Activated T-helper 2 cell treated with anti-CD3 and anti-CD28 coated beads, Interferon-gamma antibody, Interleukin-2, Interleukin-4, amounts not matched to agents 10 μg/mL and 5 μg/mL and 100 μg/mL, durations not matched to agents 14 hours and 24 hours and 36 hours (primary cell): ENCODE measurements at regions of chr1 and their contacts with region 1.

Region 1: GRCh38 chr1:66374561-66375111 is 159.3 kb upstream of the SGIP1 start:
- DNase-seq: no peak
- H3K4me3 Mint-ChIP-seq: peak overlapping the region; percentile 63
- H3K27ac Mint-ChIP-seq: peak overlapping the region; percentile 96
- H3K4me1 Mint-ChIP-seq: peaks cover 60% of the 10 kb centered on the region
- H3K27me3 Mint-ChIP-seq: no peaks in the 10 kb centered on the region

Region 2: GRCh38 chr1:65393347-65393746 is 981.3 kb before region 1 on chr1:
- intact Hi-C with region 1: loop called (anchors 10 kb)
- DNase-seq: peak; percentile 13
- H3K4me3 Mint-ChIP-seq: no peak overlapping the region
- H3K27ac Mint-ChIP-seq: peak overlapping the region; percentile 62
- H3K4me1 Mint-ChIP-seq: peaks cover 80% of the 10 kb centered on the region
- H3K27me3 Mint-ChIP-seq: no peaks in the 10 kb centered on the region

Region 3: GRCh38 chr1:66271216-66271903 is 103.3 kb before region 1 on chr1:
- intact Hi-C with region 1: loop called (anchors 1 kb)
- DNase-seq: no peak
- H3K4me3 Mint-ChIP-seq: no peak overlapping the region
- H3K27ac Mint-ChIP-seq: peak overlapping the region; percentile 44
- H3K4me1 Mint-ChIP-seq: peaks cover 62% of the 10 kb centered on the region
- H3K27me3 Mint-ChIP-seq: peaks cover 21% of the 10 kb centered on the region

Region 4: GRCh38 chr1:66331657-66332547 is 42.7 kb before region 1 on chr1:
- intact Hi-C with region 1: loop called (anchors 1 kb)
- DNase-seq: no peak
- H3K4me3 Mint-ChIP-seq: peak overlapping the region; percentile 97
- H3K27ac Mint-ChIP-seq: peak overlapping the region; percentile 90
- H3K4me1 Mint-ChIP-seq: peaks cover 62% of the 10 kb centered on the region
- H3K27me3 Mint-ChIP-seq: no peaks in the 10 kb centered on the region

Region 5: DNA sequence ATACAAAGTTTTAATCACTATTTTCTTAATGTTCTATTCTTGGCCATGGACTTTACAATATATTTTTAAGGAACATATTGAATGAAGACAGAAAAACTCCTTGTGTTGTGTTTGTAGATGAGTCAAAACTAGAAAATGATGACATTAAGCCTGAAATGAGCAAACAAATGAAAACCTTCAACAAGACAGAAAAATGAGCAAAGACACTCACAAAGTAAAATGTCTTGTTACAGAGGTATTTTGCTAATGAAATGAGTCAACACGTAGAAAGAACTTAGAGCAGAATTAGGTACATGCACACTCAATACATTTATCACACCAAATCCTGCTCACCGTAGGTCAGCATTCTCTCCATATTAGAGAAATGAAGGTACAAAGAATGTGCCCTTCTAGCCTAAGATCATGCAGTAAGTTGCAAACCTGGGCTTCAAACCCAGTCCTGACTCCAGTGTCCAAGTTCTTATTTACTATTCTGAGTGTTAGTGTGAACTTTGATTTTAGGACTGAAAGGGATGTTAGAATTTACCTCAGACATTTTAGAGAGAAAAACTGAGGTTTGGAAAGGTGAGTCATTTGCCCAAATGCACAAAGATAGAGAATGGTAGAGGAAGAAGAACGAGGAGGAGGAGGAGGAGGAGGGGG is 25.4 kb after region 1 on chr1:
- intact Hi-C with region 1: loop called (anchors 1 kb)
- DNase-seq: no peak
- H3K4me3 Mint-ChIP-seq: no peak overlapping the region
- H3K27ac Mint-ChIP-seq: peak overlapping the region; percentile 77
- H3K4me1 Mint-ChIP-seq: peaks cover 35% of the 10 kb centered on the region
- H3K27me3 Mint-ChIP-seq: no peaks in the 10 kb centered on the region

Region 6: DNA sequence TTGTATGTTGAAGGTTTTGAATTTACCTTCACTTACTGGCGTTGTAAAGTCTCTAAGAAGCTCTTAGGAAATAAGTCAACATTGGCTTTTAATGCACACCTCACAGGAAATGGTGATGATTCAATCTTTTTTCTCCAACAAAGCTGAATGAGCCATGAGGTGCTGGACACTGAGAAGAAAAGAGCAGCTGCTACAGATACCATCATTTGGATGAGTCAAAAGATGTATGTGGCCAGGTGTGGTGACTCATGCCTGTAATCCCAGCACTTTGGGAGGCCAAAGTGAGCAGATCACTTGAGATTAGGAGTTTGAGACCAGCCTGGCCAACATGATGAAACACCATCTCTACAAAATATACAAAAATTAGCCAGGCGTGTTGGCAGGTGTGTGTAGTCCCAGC is 788.3 kb after region 1 on chr1:
- intact Hi-C with region 1: loop called (anchors 10 kb)
- DNase-seq: peak; percentile 40
- H3K4me3 Mint-ChIP-seq: no peak overlapping the region
- H3K27ac Mint-ChIP-seq: peak overlapping the region; percentile 58
- H3K4me1 Mint-ChIP-seq: peaks cover 41% of the 10 kb centered on the region
- H3K27me3 Mint-ChIP-seq: no peaks in the 10 kb centered on the region